Head of caudate nucleus (tissue), 42 donors: ENCODE measurements at regions of chrX and their contacts with region 1.

Region 1: DNA sequence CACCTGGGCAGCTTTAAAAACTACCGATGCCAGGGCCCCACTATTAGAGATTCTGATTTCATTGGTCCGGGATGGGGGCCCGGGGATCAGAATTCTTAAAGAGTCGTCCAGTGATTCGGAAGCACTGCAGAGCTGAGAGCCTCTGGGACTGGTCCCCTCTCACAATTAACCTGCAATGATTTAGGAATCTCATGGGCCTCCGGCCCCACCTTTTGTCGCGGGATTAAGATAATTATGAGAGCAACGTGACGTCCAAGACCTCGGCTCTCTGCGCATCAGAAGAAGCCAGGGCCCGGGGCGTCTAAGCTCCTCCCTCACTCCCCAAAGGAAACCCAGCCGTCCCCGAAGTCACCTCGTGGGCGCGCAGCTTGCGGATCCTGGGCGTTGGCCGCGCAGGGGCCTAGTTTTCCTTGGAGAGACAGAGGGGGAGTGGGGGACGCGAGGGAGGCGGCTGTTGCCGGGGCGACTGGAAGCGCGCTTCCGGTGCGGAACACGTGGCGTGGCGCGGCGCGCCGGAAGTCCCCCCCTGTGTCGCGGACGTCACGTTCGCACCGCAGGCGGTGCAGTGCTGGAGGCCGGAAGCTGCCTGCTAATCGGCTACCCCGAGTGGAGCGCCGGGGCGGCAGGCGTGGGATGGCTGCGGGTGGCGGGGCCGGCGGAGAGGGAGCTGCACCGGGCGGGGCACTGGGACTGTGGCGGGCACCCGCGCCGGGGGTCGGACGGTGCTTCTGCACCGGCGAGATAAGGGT is at the start of gene GEMIN8:
- DNase-seq: peak; percentile 57 to 93 (median 87)

Region 2: GRCh38 chrX:13506574-13506973 is 523.0 kb before region 1 on chrX:
- intact Hi-C with region 1: loop called (anchors 2 kb)
- DNase-seq: peak in 37 of 42 donors; percentile 5 to 72 (median 46)

Region 3: DNA sequence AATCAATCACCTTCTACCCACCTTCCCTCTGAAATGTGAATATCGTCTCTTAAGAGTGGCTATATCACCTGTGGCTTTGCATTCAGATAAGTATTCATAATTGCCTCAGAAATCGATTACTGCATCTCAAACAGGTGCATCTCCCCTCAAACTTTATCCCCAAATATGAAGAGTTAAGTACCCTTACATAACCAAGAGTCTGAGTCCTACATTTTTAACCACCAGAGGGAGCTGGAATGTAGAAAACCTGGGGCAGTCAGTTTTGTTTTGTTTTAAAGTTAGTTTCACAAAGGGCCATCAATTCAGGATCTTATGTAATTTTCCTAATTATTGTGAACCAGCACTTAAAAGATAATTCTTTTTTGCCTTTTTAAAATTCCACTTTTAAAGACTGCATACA is 371.0 kb before region 1 on chrX:
- intact Hi-C with region 1: loop called (anchors 5 kb)
- DNase-seq: peak in 7 of 42 donors; percentile 8 to 58 (median 45)

Region 4: GRCh38 chrX:13764765-13765164 is 264.8 kb before region 1 on chrX:
- intact Hi-C with region 1: loop called (anchors 10 kb)
- DNase-seq: peak in 33 of 42 donors; percentile 28 to 77 (median 56)

Region 5: GRCh38 chrX:13898083-13898482 is 131.5 kb before region 1 on chrX:
- intact Hi-C with region 1: loop called (anchors 2 kb)
- DNase-seq: peak in 29 of 42 donors; percentile 11 to 79 (median 52)